ENCODE measurements at regions of chr17 and their contacts with region 1.

Region 1: GRCh38 chr17:48107168-48108132 is at the start of gene SNX11:
- DNase-seq: peak; percentile 80 to 97 (median 92)
- ATAC-seq: peak; percentile 93
- H3K4me3 ChIP-seq: peak within 1 kb of the TSS; percentile 70 to 91
- H3K4me3 Mint-ChIP-seq: peak within 1 kb of the TSS; percentile 98
- H3K27ac ChIP-seq: peak within 1 kb of the TSS; percentile 78 to 82
- H3K27ac Mint-ChIP-seq: peak within 1 kb of the TSS; percentile 88
- H3K4me1 ChIP-seq: peaks cover 37% of the 10 kb centered on the region
- H3K4me1 Mint-ChIP-seq: peaks cover 60% of the 10 kb centered on the region
- H3K27me3 ChIP-seq: no peaks in the 10 kb centered on the region
- H3K27me3 Mint-ChIP-seq: no peaks in the 10 kb centered on the region
- CTCF ChIP-seq: no peak
- total RNA-seq, gene SNX11: 15.3 to 16.3 TPM

Region 2: DNA sequence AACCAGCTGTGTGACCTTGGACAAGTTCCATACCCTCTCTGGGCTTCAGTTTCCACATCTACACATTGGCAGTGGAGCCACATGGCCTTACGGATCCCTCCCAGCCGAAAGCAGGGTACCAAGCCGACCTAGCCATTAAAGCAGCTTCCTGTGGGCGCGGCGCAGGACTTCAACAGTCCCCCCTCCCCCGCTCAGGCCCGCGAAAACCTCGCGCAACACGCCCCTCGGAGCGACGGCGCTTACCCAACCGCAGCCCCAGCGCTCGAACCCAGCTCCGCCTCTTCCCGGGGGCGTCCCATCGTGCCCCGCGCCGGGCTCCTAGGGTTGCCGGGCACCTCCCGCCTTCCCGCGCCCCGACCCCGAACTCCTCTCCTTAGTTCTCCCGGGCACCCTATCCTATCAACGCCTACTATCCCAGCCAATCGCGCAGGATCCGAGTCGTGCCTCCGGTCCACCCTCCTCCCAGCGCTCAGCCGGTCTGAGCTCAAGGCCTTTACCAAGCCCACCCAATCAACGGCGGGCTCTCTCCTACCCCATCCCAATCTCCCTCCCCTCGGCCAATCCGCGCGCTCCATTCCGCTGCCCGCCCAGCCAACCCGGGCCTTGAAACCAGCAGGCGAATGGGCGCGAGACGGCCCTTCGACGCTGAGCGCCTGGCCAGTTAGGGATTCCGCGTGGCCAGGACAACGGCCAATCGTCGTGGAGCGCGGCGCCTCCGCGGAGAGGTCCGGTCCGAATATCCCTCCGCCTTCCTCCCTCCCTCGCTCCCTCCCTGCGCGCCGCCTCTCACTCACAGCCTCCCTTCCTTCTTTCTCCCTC is 458.1 kb before region 1 on chr17 and contains the start of gene KPNB1:
- CTCF ChIA-PET with region 1: no interaction called
- POLR2A ChIA-PET with region 1: no interaction called
- intact Hi-C with region 1: loop called in 1 of 2 experiments (anchors 10 kb)
- DNase-seq: peak; percentile 94 to 99 (median 97)
- ATAC-seq: peak; percentile 82
- H3K4me3 ChIP-seq: peak within 1 kb of the TSS; percentile 70 to 89
- H3K4me3 Mint-ChIP-seq: peak within 1 kb of the TSS; percentile 100
- H3K27ac ChIP-seq: peak within 1 kb of the TSS; percentile 75 to 90
- H3K27ac Mint-ChIP-seq: peak within 1 kb of the TSS; percentile 99
- H3K4me1 ChIP-seq: peaks cover 41% of the 10 kb centered on the region
- H3K4me1 Mint-ChIP-seq: peaks cover 51% of the 10 kb centered on the region
- H3K27me3 ChIP-seq: no peaks in the 10 kb centered on the region
- H3K27me3 Mint-ChIP-seq: no peaks in the 10 kb centered on the region
- CTCF ChIP-seq: no peak
- total RNA-seq, gene KPNB1: 170 to 173 TPM

Region 3: GRCh38 chr17:47831003-47831933 is 276.2 kb before region 1 on chr17 and contains the starts of genes LRRC46 and MRPL10:
- CTCF ChIA-PET with region 1: no interaction called
- POLR2A ChIA-PET with region 1: no interaction called
- intact Hi-C with region 1: loop called (anchors 10 kb)
- DNase-seq: peak; percentile 80 to 96 (median 91)
- ATAC-seq: peak; percentile 71
- H3K4me3 ChIP-seq: peak within 1 kb of the TSS; percentile 87 to 95
- H3K4me3 Mint-ChIP-seq: peak within 1 kb of the TSS; percentile 91
- H3K27ac ChIP-seq: peak within 1 kb of the TSS; percentile 84 to 96
- H3K27ac Mint-ChIP-seq: peak within 1 kb of the TSS; percentile 98
- H3K4me1 ChIP-seq: peaks cover 30% of the 10 kb centered on the region
- H3K4me1 Mint-ChIP-seq: peaks cover 51% of the 10 kb centered on the region
- H3K27me3 ChIP-seq: no peaks in the 10 kb centered on the region
- H3K27me3 Mint-ChIP-seq: no peaks in the 10 kb centered on the region
- CTCF ChIP-seq: peak; percentile 36
- total RNA-seq, gene LRRC46: 0.43 to 1.5 TPM
- total RNA-seq, gene MRPL10: 67.5 to 69.7 TPM

Region 4: GRCh38 chr17:47941236-47941994 is 166.0 kb before region 1 on chr17 and contains the start of gene PNPO:
- CTCF ChIA-PET with region 1: no interaction called
- POLR2A ChIA-PET with region 1: no interaction called
- intact Hi-C with region 1: loop called (anchors 5 to 10 kb)
- DNase-seq: peak; percentile 82 to 98 (median 92)
- ATAC-seq: peak; percentile 97
- H3K4me3 ChIP-seq: peak within 1 kb of the TSS; percentile 72 to 92
- H3K4me3 Mint-ChIP-seq: peak within 1 kb of the TSS; percentile 86
- H3K27ac ChIP-seq: peak within 1 kb of the TSS; percentile 57 to 88
- H3K27ac Mint-ChIP-seq: peak within 1 kb of the TSS; percentile 87
- H3K4me1 ChIP-seq: peaks cover 47% of the 10 kb centered on the region
- H3K4me1 Mint-ChIP-seq: peaks cover 54% of the 10 kb centered on the region
- H3K27me3 ChIP-seq: no peaks in the 10 kb centered on the region
- H3K27me3 Mint-ChIP-seq: no peaks in the 10 kb centered on the region
- CTCF ChIP-seq: no peak
- total RNA-seq, gene PNPO: 5.7 to 5.8 TPM

Region 5: DNA sequence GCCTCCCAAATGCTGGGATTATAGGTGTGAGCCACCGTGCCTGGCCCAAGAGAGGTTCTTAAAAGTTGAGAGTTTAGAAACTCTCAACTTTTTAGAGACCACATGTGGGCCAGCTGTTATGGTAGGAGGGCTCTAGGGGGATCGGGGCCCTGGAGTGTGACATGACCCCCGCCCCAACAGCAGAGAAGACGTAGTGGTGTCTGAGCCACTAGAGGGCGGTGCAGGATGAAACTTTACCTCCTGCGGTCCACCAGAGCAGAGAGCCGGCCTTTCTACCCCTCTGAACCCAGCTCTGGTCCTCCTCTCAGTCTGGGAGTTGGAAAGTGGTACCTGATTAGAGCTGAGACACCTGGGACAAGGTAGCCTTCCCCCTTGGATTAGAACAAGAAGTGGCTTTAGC is 129.1 kb before region 1 on chr17:
- CTCF ChIA-PET with region 1: no interaction called
- POLR2A ChIA-PET with region 1: no interaction called
- intact Hi-C with region 1: no loop called
- DNase-seq: peak; percentile 8 to 65 (median 49)
- ATAC-seq: peak; percentile 68
- H3K4me3 ChIP-seq: no peak overlapping the region
- H3K4me3 Mint-ChIP-seq: no peak overlapping the region
- H3K27ac ChIP-seq: no peak overlapping the region
- H3K27ac Mint-ChIP-seq: no peak overlapping the region
- H3K4me1 ChIP-seq: no peaks in the 10 kb centered on the region
- H3K4me1 Mint-ChIP-seq: peaks cover 6% of the 10 kb centered on the region
- H3K27me3 ChIP-seq: no peaks in the 10 kb centered on the region
- H3K27me3 Mint-ChIP-seq: no peaks in the 10 kb centered on the region
- CTCF ChIP-seq: peak; percentile 58

Region 6: DNA sequence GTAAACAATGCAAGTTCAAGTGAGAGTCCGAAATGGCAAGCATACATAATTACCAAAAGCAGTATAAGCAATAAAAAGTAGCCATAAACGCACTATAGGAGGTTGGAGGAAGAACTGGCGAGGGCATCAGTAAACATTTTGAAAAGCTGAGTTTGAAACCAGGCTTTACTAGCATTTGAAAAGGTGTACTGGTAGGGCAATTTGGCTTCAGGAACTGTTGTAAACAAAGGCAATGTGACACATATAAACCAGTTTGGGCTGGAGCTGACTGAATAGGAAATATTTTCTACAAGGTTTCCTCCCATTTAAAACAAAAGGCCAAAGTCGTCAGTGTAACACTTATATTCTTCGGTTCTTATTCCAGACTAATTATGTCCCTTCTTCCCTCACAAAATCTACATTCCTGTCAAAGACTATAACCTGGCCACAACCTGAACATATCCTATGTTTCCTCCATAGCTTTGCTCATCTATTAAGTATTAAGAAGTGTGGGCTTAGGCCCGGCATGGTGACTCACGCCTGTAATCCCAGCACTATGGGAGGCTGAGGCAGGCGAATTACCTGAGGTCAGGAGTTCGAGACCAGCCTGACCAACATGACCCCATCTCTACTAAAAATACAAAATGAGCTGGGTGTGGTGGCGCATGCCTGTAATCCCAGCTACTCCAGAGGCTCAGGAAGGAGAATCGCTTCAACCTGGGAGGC is 14.0 kb before region 1 on chr17:
- CTCF ChIA-PET with region 1: interaction called, 20 read pairs
- POLR2A ChIA-PET with region 1: interaction called, 3 read pairs
- intact Hi-C with region 1: no loop called
- DNase-seq: no peak
- ATAC-seq: no peak
- H3K4me3 ChIP-seq: no peak overlapping the region
- H3K4me3 Mint-ChIP-seq: no peak overlapping the region
- H3K27ac ChIP-seq: no peak overlapping the region
- H3K27ac Mint-ChIP-seq: no peak overlapping the region
- H3K4me1 ChIP-seq: no peaks in the 10 kb centered on the region
- H3K4me1 Mint-ChIP-seq: peaks cover 15% of the 10 kb centered on the region
- H3K27me3 ChIP-seq: no peaks in the 10 kb centered on the region
- H3K27me3 Mint-ChIP-seq: no peaks in the 10 kb centered on the region
- CTCF ChIP-seq: no peak

Region 7: GRCh38 chr17:49687878-49688491 is 1580.5 kb after region 1 on chr17:
- CTCF ChIA-PET with region 1: no interaction called
- POLR2A ChIA-PET with region 1: no interaction called
- intact Hi-C with region 1: loop called in 1 of 2 experiments (anchors 10 kb)
- DNase-seq: peak in 4 of 9 experiments; percentile 23 to 72 (median 54)
- ATAC-seq: peak; percentile 87
- H3K4me3 ChIP-seq: peak overlapping the region; percentile 37 to 58
- H3K4me3 Mint-ChIP-seq: peak overlapping the region; percentile 84
- H3K27ac ChIP-seq: peak overlapping the region; percentile 61 to 85
- H3K27ac Mint-ChIP-seq: peak overlapping the region; percentile 98
- H3K4me1 ChIP-seq: peaks cover 52% of the 10 kb centered on the region
- H3K4me1 Mint-ChIP-seq: peaks cover 52% of the 10 kb centered on the region
- H3K27me3 ChIP-seq: no peaks in the 10 kb centered on the region
- H3K27me3 Mint-ChIP-seq: no peaks in the 10 kb centered on the region
- CTCF ChIP-seq: no peak